Activated CD4-positive, alpha-beta T cell treated with anti-CD3 and anti-CD28 coated beads for 36 hours (primary cell): ENCODE measurements at regions of chr5 and their contacts with region 1.

Region 1: DNA sequence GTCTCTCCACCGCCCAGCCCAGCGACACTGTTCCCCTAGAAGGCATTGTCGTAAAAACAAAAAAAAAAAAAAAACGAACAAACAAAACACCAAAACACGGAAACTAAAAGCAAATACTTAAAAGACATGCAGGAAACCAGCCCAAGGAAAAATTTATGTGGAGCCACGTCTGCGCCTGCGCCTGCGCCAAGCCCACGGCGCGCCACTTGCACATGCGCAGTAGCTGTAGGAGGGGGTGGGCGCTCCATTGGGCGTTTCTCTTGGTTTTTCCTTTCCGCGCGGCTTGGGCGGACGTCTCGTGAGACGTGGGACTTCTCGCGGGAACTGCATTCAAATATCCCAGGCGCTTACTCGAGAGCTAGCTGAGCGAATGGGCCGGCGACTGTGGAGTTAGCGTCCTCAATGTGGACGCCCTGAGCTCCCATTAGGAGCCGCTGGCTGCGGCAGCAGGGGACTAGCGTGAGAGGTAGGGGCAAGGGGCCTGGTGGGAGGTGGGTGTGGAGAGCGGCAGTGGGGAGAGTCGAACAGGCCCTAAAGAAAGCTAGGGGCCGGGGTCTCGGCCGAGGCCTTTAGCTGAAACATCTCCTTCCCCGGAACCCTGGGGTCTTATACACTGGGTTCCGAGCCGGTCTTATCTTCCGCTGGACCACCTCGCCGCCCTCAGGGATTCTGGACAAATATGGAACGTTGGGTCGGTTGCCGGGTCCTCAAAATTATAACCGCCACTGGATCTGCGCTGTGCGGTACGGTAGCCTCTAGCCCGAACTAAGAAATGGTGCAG is at the start of gene SPDL1:
- DNase-seq: peak; percentile 97
- ATAC-seq: peak; percentile 96
- H3K4me3 Mint-ChIP-seq: peak within 1 kb of the TSS; percentile 93
- H3K27ac Mint-ChIP-seq: peak within 1 kb of the TSS; percentile 87
- H3K4me1 Mint-ChIP-seq: peaks cover 38% of the 10 kb centered on the region
- H3K27me3 Mint-ChIP-seq: no peaks in the 10 kb centered on the region
- total RNA-seq, gene SPDL1: 40.3 to 56.6 TPM

Region 2: GRCh38 chr5:168227973-168228615 is 1355.5 kb before region 1 on chr5:
- CTCF ChIA-PET with region 1: no interaction called
- POLR2A ChIA-PET with region 1: no interaction called
- intact Hi-C with region 1: loop called in 1 of 2 experiments (anchors 5 kb)
- DNase-seq: peak; percentile 52
- ATAC-seq: peak; percentile 93
- H3K4me3 Mint-ChIP-seq: no peak overlapping the region
- H3K27ac Mint-ChIP-seq: peak overlapping the region; percentile 62
- H3K4me1 Mint-ChIP-seq: peaks cover 28% of the 10 kb centered on the region
- H3K27me3 Mint-ChIP-seq: peaks cover 5% of the 10 kb centered on the region

Region 3: GRCh38 chr5:168579488-168580226 is 1004.0 kb before region 1 on chr5:
- CTCF ChIA-PET with region 1: no interaction called
- POLR2A ChIA-PET with region 1: no interaction called
- intact Hi-C with region 1: loop called (anchors 1 to 5 kb)
- DNase-seq: peak; percentile 98
- ATAC-seq: peak; percentile 98
- H3K4me3 Mint-ChIP-seq: peak overlapping the region; percentile 91
- H3K27ac Mint-ChIP-seq: peak overlapping the region; percentile 99
- H3K4me1 Mint-ChIP-seq: peaks cover 34% of the 10 kb centered on the region
- H3K27me3 Mint-ChIP-seq: no peaks in the 10 kb centered on the region

Region 4: GRCh38 chr5:168947212-168947868 is 636.3 kb before region 1 on chr5:
- CTCF ChIA-PET with region 1: no interaction called
- POLR2A ChIA-PET with region 1: no interaction called
- intact Hi-C with region 1: loop called in 1 of 2 experiments (anchors 1 kb)
- DNase-seq: peak; percentile 73
- ATAC-seq: peak; percentile 58
- H3K4me3 Mint-ChIP-seq: no peak overlapping the region
- H3K27ac Mint-ChIP-seq: no peak overlapping the region
- H3K4me1 Mint-ChIP-seq: peaks cover 8% of the 10 kb centered on the region
- H3K27me3 Mint-ChIP-seq: no peaks in the 10 kb centered on the region

Region 5: GRCh38 chr5:169545762-169546161 is 37.9 kb before region 1 on chr5:
- CTCF ChIA-PET with region 1: no interaction called
- POLR2A ChIA-PET with region 1: no interaction called
- intact Hi-C with region 1: loop called in 1 of 2 experiments (anchors 2 kb)
- DNase-seq: peak; percentile 22
- ATAC-seq: peak; percentile 100
- H3K4me3 Mint-ChIP-seq: no peak overlapping the region
- H3K27ac Mint-ChIP-seq: no peak overlapping the region
- H3K4me1 Mint-ChIP-seq: peaks cover 10% of the 10 kb centered on the region
- H3K27me3 Mint-ChIP-seq: peaks cover 55% of the 10 kb centered on the region

Region 6: GRCh38 chr5:169650701-169651331 is 67.2 kb after region 1 on chr5:
- CTCF ChIA-PET with region 1: interaction called, 3 read pairs
- POLR2A ChIA-PET with region 1: no interaction called
- intact Hi-C with region 1: loop called (anchors 5 kb)
- DNase-seq: peak; percentile 39
- ATAC-seq: peak; percentile 72
- H3K4me3 Mint-ChIP-seq: peak overlapping the region; percentile 56
- H3K27ac Mint-ChIP-seq: peak overlapping the region; percentile 97
- H3K4me1 Mint-ChIP-seq: peaks cover 98% of the 10 kb centered on the region
- H3K27me3 Mint-ChIP-seq: no peaks in the 10 kb centered on the region

Region 7: GRCh38 chr5:170132269-170132975 is 548.8 kb after region 1 on chr5:
- CTCF ChIA-PET with region 1: no interaction called
- POLR2A ChIA-PET with region 1: no interaction called
- intact Hi-C with region 1: no loop called
- DNase-seq: no peak
- ATAC-seq: no peak
- H3K4me3 Mint-ChIP-seq: no peak overlapping the region
- H3K27ac Mint-ChIP-seq: no peak overlapping the region
- H3K4me1 Mint-ChIP-seq: no peaks in the 10 kb centered on the region
- H3K27me3 Mint-ChIP-seq: peaks cover 24% of the 10 kb centered on the region

Region 8: GRCh38 chr5:170312666-170313065 is 729.1 kb after region 1 on chr5:
- CTCF ChIA-PET with region 1: no interaction called
- POLR2A ChIA-PET with region 1: no interaction called
- intact Hi-C with region 1: loop called in 1 of 2 experiments (anchors 10 kb)
- DNase-seq: peak; percentile 84
- ATAC-seq: peak; percentile 91
- H3K4me3 Mint-ChIP-seq: peak overlapping the region; percentile 80
- H3K27ac Mint-ChIP-seq: peak overlapping the region; percentile 98
- H3K4me1 Mint-ChIP-seq: peaks cover 67% of the 10 kb centered on the region
- H3K27me3 Mint-ChIP-seq: no peaks in the 10 kb centered on the region